Prostate gland (tissue), 2 donors: ENCODE measurements at regions of chr20 and their contacts with region 1.

Region 1: GRCh38 chr20:33731693-33732165 is at the start of gene ZNF341:
- DNase-seq: peak; percentile 82
- H3K4me3 ChIP-seq: peak within 1 kb of the TSS; percentile 43 to 51
- H3K27ac ChIP-seq: peak within 1 kb of the TSS; percentile 93 to 94
- H3K4me1 ChIP-seq: peaks cover 8% of the 10 kb centered on the region
- H3K27me3 ChIP-seq: no peaks in the 10 kb centered on the region
- CTCF ChIP-seq: peak; percentile 71 to 93 (median 82)
- POLR2A ChIP-seq: no peak
- total RNA-seq, gene ZNF341: 2.8 to 7.0 TPM

Region 2: DNA sequence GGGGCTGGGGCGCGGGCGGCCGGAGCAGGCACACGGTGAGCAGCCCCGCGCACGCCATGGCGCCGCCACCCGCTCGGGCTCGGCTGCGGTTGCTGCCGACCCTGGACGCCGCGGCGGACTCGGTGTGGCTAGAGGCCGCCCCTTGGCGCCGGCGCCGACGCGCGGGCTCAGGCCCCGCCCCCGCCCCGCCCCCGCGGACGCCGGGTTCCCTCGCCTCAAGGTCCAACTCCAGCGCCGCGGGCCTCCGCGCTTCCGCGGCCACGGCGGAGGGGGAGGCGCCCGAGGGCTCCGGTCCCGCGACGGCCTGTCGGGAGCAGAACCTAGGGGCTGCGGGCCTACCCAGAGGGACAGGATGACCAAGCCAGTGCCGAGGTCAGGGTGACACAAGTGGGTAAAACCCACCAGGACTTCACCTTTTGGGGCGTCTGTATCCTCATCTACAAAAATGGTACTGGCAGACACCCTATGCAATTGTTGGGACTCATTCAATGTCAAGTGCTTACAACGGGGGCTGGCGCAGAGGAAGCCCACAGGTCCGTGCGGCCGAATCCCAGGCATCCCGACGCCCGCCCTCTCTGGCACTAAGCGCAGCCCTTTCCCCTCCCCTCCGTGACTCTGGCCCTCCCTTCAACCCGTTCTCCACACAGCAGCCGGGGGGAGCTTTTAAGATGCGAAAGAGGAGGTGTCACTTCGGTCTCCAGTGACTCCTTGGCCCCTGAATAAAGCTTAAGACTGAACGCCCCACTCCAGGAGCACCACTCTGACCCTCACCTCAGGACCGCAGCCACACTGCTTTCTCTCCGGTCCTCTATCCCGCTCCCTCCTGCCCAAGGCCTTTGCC is 57.2 kb before region 1 on chr20 and contains the start of gene NECAB3:
- intact Hi-C with region 1: loop called (anchors 5 kb)
- DNase-seq: peak; percentile 83
- H3K4me3 ChIP-seq: peak within 1 kb of the TSS; percentile 70 to 78
- H3K27ac ChIP-seq: peak within 1 kb of the TSS; percentile 90 to 92
- H3K4me1 ChIP-seq: peaks cover 9% of the 10 kb centered on the region
- H3K27me3 ChIP-seq: no peaks in the 10 kb centered on the region
- CTCF ChIP-seq: peak in 2 of 4 experiments; percentile 4 to 26
- POLR2A ChIP-seq: peak; percentile 56
- total RNA-seq, gene NECAB3: 142 to 156 TPM